ENCODE measurements at regions of chr10 and their contacts with region 1.

Region 1: DNA sequence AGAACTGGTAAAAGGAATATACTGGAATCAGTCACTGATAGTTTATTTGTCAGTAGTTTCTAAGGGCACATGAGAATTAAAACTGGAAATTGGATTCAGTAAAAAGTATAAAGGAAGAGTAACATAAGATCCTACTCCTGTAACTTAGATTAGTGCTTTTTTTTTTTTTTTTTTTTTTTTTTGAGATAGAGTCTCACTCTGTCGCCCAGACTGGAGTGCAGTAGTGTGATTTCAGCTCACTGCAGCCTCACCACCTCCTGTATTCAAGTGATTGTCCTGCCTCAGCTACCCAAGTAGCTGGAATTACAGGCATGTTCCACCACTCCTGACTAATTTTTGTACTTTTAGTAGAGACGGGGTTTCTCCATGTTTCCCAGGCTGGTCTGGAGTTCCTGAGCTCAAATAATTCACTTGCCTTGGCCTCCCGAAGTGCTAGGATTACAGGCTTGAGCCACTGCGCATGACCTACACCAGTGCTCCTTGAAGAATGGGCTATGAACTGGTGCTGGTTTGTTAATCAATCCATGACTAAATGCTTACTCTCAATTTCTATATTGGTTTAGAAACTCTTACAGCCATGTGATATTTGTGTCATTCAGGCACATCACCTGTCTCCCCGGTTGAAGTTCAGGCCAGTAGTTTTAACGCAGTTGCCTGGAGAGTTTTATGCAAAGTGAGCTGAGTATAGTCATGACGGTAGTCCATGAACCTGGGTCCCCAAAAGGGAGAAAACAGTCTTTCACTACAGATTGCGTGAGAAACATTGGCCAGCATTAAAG is 65.0 kb downstream of the ZEB1 start:
- DNase-seq: peak; percentile 93
- ATAC-seq: peak; percentile 94
- H3K4me3 ChIP-seq: peak overlapping the region; percentile 49
- H3K27ac ChIP-seq: peak overlapping the region; percentile 97
- H3K4me1 ChIP-seq: peaks cover 19% of the 10 kb centered on the region
- H3K27me3 ChIP-seq: no peaks in the 10 kb centered on the region
- CTCF ChIP-seq: no peak
- EP300 ChIP-seq: peak; percentile 88 to 94
- POLR2A ChIP-seq: peak; percentile 60; the same call in 1 of the 2 replicates
- RAD21 ChIP-seq: peak; percentile 16; the same call in 1 of the 2 replicates

Region 2: GRCh38 chr10:31340343-31340742 is 43.7 kb before region 1 on chr10:
- CTCF ChIA-PET with region 1: no interaction called
- POLR2A ChIA-PET with region 1: interaction called, 6 read pairs
- RAD21 ChIA-PET with region 1: interaction called, 8 read pairs
- SMC1A ChIA-PET with region 1: interaction called, 11 read pairs
- in situ Hi-C with region 1: no loop called
- intact Hi-C with region 1: loop called (anchors 5 kb)
- DNase-seq: no peak
- ATAC-seq: peak; percentile 36
- H3K4me3 ChIP-seq: no peak overlapping the region; the same call in 1 of the 2 replicates
- H3K27ac ChIP-seq: peak overlapping the region; percentile 43; the same call in 1 of the 2 replicates
- H3K4me1 ChIP-seq: peaks cover 25% of the 10 kb centered on the region
- H3K27me3 ChIP-seq: no peaks in the 10 kb centered on the region
- CTCF ChIP-seq: no peak
- EP300 ChIP-seq: no peak
- POLR2A ChIP-seq: no peak
- RAD21 ChIP-seq: no peak

Region 3: GRCh38 chr10:31345886-31346285 is 38.1 kb before region 1 on chr10:
- CTCF ChIA-PET with region 1: interaction called, 3 read pairs
- POLR2A ChIA-PET with region 1: interaction called, 6 read pairs
- RAD21 ChIA-PET with region 1: interaction called, 8 read pairs
- SMC1A ChIA-PET with region 1: interaction called, 11 read pairs
- in situ Hi-C with region 1: no loop called
- intact Hi-C with region 1: loop called (anchors 5 kb)
- DNase-seq: no peak
- ATAC-seq: no peak
- H3K4me3 ChIP-seq: no peak overlapping the region
- H3K27ac ChIP-seq: no peak overlapping the region
- H3K4me1 ChIP-seq: peaks cover 45% of the 10 kb centered on the region
- H3K27me3 ChIP-seq: no peaks in the 10 kb centered on the region
- CTCF ChIP-seq: no peak
- EP300 ChIP-seq: no peak
- POLR2A ChIP-seq: no peak
- RAD21 ChIP-seq: no peak

Region 4: GRCh38 chr10:31353574-31353973 is 30.4 kb before region 1 on chr10:
- CTCF ChIA-PET with region 1: interaction called, 4 read pairs
- POLR2A ChIA-PET with region 1: interaction called, 5 read pairs
- RAD21 ChIA-PET with region 1: interaction called, 10 read pairs
- SMC1A ChIA-PET with region 1: interaction called, 6 read pairs
- in situ Hi-C with region 1: no loop called
- intact Hi-C with region 1: loop called (anchors 5 kb)
- DNase-seq: peak; percentile 73
- ATAC-seq: peak; percentile 90
- H3K4me3 ChIP-seq: no peak overlapping the region
- H3K27ac ChIP-seq: no peak overlapping the region; the same call in 1 of the 2 replicates
- H3K4me1 ChIP-seq: peaks cover 25% of the 10 kb centered on the region
- H3K27me3 ChIP-seq: no peaks in the 10 kb centered on the region
- CTCF ChIP-seq: peak; percentile 31 to 55 (median 33); a peak in 4 of 6 replicates
- EP300 ChIP-seq: peak; percentile 61 to 66; a peak in 2 of 4 replicates
- POLR2A ChIP-seq: no peak
- RAD21 ChIP-seq: peak; percentile 57

Measured in GM12878 (cell line).